ENCODE measurements at regions of chr15 and their contacts with region 1.

Region 1: GRCh38 chr15:78979456-78980320 is 34.8 kb upstream of the CTSH start:
- DNase-seq: peak; percentile 69 to 79
- H3K4me3 ChIP-seq: no peak overlapping the region
- H3K27ac ChIP-seq: no peak overlapping the region
- H3K4me1 ChIP-seq: no peaks in the 10 kb centered on the region; a peak in 2 of 7 replicates
- H3K27me3 ChIP-seq: peaks cover 0 to 13% (median 8%) of the 10 kb centered on the region in 4 experiments; a peak in 3 of 7 replicates
- CTCF ChIP-seq: peak; percentile 75 to 92 (median 82)
- EP300 ChIP-seq: no peak
- POLR2A ChIP-seq: no peak
- RAD21 ChIP-seq: peak; percentile 77 to 87

Region 2: DNA sequence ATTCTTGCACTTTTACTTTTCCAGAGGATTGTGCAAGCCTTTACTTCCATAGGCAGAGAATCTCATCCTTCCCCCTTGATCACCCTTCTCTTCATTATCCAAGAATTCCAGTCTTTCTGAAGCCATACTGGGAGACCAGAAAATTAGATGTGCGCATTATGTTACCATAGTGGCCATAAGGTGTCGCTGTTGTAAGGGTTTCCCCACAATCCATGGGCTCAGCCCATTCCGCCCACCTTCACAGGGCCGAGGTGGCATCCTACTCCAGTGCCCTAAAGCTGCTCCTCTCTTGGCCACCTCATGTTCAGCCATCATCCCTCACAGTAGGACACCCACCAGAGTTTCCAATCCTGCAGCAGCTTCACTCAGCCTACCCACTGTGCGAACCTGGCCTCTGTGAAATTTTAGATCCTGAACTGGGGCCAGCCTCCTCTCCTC is 69.9 kb before region 1 on chr15:
- CTCF ChIA-PET with region 1: interaction called, 123 read pairs
- POLR2A ChIA-PET with region 1: interaction called, 20 read pairs
- DNase-seq: peak in 1 of 2 experiments; percentile 79
- H3K4me3 ChIP-seq: no peak overlapping the region
- H3K27ac ChIP-seq: no peak overlapping the region
- H3K4me1 ChIP-seq: peaks cover 0 to 3% (median 1%) of the 10 kb centered on the region in 4 experiments; a peak in 3 of 7 replicates
- H3K27me3 ChIP-seq: no peaks in the 10 kb centered on the region
- CTCF ChIP-seq: peak; percentile 59 to 93 (median 86)
- EP300 ChIP-seq: no peak
- POLR2A ChIP-seq: no peak
- RAD21 ChIP-seq: peak; percentile 89 to 90

Region 3: DNA sequence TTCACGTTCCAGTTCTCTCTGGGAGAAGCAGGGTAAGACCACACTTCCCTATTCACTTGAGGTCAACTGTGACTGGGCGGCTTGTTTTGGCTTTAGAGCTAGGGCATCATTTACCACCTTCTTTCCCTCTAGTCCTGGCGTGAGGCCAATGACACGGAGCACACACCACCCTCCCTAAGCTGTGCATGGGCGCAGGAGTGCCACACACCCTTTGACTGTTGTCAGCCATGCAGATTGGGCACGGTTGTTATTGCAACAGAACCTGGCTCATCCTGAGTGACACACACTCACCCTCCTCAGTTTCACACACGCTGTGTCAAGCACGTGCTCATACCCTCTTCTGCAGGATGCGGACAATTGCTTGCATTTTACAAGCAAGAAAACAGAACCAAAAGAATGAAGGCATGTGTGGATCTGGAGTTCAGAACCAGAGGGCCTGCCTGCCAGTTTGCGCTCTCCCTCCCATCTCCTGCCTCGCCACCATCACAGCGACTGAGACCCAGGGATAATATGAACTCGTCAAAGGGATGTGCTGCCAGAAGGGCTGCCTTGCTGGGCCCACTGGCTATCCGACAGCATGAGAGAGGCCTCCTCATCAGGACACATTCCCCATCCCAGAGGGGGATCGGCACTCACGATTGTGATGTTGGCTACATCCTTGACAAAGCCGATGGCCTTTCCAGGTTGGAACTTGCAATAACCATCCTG is 52.5 kb before region 1 on chr15:
- CTCF ChIA-PET with region 1: interaction called, 36 read pairs
- POLR2A ChIA-PET with region 1: interaction called, 6 read pairs
- DNase-seq: no peak
- H3K4me3 ChIP-seq: no peak overlapping the region
- H3K27ac ChIP-seq: no peak overlapping the region
- H3K4me1 ChIP-seq: no peaks in the 10 kb centered on the region
- H3K27me3 ChIP-seq: no peaks in the 10 kb centered on the region; a peak in 1 of 7 replicates
- CTCF ChIP-seq: no peak
- EP300 ChIP-seq: no peak
- POLR2A ChIP-seq: no peak
- RAD21 ChIP-seq: no peak

Region 4: DNA sequence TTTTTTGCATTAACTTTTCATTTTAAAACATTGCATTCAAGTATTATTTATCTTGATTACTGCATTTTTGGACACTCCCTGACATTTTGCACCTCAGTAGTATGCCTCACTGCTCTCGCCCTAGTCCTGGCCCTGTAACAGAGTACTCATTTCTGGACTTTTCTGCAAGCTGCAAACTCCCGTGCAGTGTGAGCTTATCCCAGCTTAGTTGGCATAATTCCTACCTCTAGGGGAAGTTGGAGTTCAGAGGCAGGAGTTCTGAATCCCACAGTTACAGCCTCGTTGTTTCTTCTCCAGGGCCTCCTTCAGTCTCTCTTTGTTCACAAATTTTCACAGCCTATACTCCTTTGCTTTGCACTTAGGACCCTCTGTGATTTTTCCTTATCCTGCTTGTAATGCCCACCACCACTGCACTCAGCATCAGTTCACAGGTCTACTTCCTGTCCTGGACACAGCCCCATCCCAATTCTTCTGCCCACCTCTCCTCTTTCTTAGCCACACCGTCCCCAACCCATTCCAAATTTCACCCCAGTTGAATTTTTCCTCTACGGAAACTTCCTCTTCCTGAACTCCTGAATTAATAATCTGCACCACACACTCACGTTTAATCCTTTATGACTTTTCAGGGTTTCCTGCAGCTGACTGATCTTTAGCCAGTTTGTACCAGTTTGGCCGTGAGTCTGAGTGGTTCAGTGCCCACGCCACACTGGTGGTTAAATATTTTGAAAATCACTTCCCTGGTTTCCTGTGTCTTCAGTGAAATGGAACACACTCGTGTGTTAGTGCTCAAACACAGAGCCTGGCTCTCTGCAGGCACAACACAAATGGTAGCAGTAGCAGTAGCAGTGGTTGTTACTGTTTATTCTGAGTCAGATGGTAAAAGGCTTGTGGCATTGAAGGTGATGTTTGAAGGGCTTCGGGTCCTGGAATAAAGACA is 28.5 kb before region 1 on chr15:
- CTCF ChIA-PET with region 1: interaction called, 48 read pairs
- POLR2A ChIA-PET with region 1: interaction called, 3 read pairs
- DNase-seq: no peak
- H3K4me3 ChIP-seq: no peak overlapping the region
- H3K27ac ChIP-seq: no peak overlapping the region
- H3K4me1 ChIP-seq: peaks cover 0 to 7% (median 1%) of the 10 kb centered on the region in 4 experiments; a peak in 3 of 7 replicates
- H3K27me3 ChIP-seq: no peaks in the 10 kb centered on the region
- CTCF ChIP-seq: peak in 1 of 3 experiments; percentile 23; a peak in 1 of 4 replicates
- EP300 ChIP-seq: no peak
- POLR2A ChIP-seq: no peak
- RAD21 ChIP-seq: peak in 1 of 2 experiments; percentile 9; a peak in 1 of 4 replicates

Region 5: DNA sequence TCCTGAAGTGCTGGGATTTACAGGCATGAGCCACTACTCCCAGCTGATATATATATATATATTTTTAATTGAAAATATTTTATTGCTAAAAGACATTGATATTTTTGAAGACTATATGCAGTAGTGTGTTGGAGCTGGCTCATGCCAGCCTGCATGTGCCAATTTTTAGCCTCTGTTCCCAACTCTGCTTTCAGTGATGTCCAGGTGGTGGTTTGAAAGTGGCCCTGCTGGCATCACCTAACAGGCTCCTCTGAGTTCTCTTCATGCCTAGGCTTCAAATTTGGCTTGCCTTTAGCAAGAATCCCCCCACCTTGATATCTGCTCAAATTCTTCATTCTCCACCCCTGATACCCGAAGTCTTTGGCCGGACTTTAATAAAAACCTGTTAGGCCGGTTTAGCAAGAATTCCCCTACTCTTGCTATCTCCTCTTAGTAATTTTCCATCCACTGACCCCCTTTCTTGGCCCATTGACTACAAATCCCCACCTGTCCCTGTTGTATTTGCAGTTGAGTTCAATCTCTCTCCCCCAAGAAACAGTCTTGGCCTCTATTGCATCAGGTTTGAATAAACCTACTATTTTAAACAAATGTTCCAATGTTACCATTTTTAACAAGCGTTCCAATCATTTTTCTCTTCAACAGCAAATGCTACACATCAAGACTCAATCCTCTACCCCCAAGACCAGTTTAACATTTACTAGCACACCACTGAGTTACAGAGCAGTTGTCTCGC is 11.0 kb before region 1 on chr15:
- CTCF ChIA-PET with region 1: interaction called, 60 read pairs
- POLR2A ChIA-PET with region 1: interaction called, 5 read pairs
- DNase-seq: no peak
- H3K4me3 ChIP-seq: peak overlapping the region in 1 of 4 experiments; percentile 12; a peak in 1 of 8 replicates
- H3K27ac ChIP-seq: no peak overlapping the region; the same call in 1 of the 2 replicates
- H3K4me1 ChIP-seq: peaks cover 7 to 19% (median 13%) of the 10 kb centered on the region in 4 experiments; a peak in 5 of 7 replicates
- H3K27me3 ChIP-seq: no peaks in the 10 kb centered on the region
- CTCF ChIP-seq: no peak
- EP300 ChIP-seq: 0 out of 3 replicates have a peak, but pooled peaks of 1 of the 2 experiments have one; percentile 20
- POLR2A ChIP-seq: no peak
- RAD21 ChIP-seq: no peak

Region 6: DNA sequence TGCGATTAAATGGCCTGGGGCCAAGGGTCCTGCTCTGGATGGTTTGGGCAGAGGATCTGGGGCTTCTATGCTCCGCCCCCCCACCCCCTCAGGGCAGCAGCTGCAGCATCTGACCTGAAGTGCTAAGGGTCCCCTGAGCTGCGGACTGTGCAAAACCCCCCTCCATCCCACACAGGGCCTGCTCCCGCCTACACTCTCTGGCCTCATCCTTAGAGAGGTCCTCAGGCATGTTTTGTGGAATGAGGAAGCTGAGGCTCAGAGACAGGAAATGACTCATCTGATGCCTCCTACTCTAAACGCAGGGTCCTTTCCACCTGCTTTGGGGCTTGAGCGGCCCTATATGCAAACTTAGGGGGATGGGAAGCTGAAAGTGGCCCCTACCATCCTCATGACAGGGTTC is 24.6 kb after region 1 on chr15:
- CTCF ChIA-PET with region 1: interaction called, 27 read pairs
- POLR2A ChIA-PET with region 1: interaction called, 3 read pairs
- DNase-seq: no peak
- H3K4me3 ChIP-seq: no peak overlapping the region
- H3K27ac ChIP-seq: no peak overlapping the region
- H3K4me1 ChIP-seq: peaks cover 0 to 10% (median under 1%) of the 10 kb centered on the region in 4 experiments; a peak in 4 of 7 replicates
- H3K27me3 ChIP-seq: no peaks in the 10 kb centered on the region; a peak in 2 of 7 replicates
- CTCF ChIP-seq: no peak
- EP300 ChIP-seq: no peak
- POLR2A ChIP-seq: no peak
- RAD21 ChIP-seq: no peak

Measured in H1 (cell line).